ENCODE measurements at regions of chr5 and their contacts with region 1.

Region 1: DNA sequence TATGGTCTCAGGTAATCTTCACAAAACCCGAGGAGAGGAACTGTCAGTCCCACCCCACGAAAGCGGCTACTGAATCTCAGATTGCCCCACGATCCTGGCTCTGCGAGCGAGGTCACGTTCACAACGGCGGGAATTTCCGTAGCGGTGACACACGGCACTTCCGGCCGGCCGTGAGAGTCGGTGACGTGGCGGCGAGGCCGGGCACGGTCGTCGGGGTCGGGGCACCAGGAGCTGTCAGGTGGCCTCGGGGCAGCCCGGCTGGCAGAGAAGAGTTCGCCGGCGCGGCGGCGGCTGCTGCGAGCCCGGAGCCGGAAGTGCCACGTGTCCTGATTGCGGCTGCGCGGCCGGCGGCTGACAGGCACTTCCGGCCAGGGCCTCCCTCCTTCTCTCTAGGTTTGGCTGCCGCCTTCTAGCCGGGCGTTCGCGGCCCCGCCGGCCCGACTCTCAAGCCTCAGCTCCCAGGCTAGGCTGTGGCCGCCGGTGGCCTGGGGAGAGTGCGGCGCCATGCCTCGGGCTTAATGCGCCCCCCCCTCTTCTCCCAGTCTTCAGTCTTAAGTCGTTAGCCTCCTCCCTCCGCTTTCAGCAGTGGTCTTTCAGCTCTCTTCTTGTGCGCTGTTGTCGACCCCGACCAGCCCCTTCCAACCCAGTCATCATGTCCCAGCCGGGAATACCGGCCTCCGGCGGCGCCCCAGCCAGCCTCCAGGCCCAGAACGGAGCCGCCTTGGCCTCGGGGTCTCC is at the start of gene SEC24A:
- DNase-seq: peak; percentile 95 to 97
- ATAC-seq: peak; percentile 93 to 96 (median 94)
- H3K4me3 ChIP-seq: peak within 1 kb of the TSS; percentile 98
- H3K27ac ChIP-seq: peak within 1 kb of the TSS; percentile 99
- H3K4me1 ChIP-seq: peaks cover 26% of the 10 kb centered on the region
- H3K27me3 ChIP-seq: no peaks in the 10 kb centered on the region
- CTCF ChIP-seq: no peak
- total RNA-seq, gene SEC24A: 5.7 to 25.2 (median 13.7) TPM

Region 2: DNA sequence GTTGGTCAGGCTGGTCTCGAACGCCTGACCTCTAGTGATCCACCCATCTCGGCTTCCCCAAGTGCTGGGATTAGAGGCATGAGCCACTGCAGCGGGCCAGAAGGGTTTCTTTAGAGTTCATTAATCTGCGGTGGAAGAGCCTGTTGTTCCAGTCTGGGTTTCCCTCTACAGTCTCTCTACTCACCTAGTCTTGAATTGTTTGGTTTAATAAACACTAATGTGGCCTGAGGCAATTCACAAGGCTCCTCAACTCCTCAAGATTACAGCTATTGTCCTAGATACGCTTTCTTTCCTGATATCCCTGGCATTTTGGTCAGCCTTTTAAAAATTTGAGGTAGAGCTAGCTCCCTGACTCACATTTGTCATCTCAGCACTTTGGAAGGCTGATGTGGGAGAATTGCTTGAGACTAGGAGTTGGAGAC is 11.4 kb before region 1 on chr5:
- intact Hi-C with region 1: loop called (anchors 2 kb)
- DNase-seq: no peak
- ATAC-seq: no peak
- H3K4me3 ChIP-seq: no peak overlapping the region
- H3K27ac ChIP-seq: no peak overlapping the region
- H3K4me1 ChIP-seq: no peaks in the 10 kb centered on the region
- H3K27me3 ChIP-seq: no peaks in the 10 kb centered on the region
- CTCF ChIP-seq: no peak